ENCODE measurements at regions of chr17 and their contacts with region 1.

Region 1: DNA sequence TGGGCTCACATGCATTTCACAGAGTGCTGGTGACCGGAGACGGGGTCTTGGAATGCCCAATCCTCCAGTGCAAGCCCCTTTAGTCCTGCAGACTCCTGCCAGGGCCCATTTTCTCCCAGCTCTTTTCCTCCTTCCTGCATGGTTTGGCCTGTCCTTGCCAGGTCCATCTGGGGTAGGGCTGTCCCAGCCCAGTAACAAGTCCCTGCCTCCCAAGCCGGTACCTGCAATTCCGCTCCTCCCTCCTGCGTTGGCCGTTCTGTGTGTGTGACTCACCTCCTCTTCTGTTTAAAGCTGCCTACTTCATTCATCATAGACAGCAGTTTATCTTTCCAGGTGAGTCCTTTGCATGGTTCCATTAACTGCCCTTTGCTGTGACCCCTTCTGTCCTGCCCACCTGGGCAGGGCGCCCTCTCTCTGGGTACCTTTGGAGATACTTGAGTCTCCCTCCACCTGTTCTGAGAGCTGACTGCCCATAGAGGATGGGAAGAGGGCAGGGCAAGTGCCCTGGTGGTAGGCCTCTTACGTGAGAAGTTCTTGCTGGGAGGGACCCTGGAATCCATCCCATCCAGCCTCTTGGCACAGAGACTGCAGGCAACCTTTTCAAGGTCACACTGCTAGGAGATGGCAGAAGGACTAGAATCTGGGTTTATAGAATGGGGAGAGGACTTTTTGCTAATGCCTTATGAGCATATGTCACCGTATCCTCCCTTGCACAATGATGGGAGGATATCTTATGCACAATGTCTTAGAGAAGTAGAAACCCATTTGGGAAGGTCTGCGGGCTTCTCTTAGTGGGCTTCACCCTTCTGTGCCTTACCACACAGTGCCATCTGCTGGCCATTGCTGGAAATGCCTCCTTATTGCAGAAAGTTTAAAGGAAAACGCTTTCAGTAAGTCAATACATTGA is 29.7 kb upstream of the LGALS9 start:
- DNase-seq: peak in 9 of 10 donors; percentile 60 to 96 (median 89)

Region 2: DNA sequence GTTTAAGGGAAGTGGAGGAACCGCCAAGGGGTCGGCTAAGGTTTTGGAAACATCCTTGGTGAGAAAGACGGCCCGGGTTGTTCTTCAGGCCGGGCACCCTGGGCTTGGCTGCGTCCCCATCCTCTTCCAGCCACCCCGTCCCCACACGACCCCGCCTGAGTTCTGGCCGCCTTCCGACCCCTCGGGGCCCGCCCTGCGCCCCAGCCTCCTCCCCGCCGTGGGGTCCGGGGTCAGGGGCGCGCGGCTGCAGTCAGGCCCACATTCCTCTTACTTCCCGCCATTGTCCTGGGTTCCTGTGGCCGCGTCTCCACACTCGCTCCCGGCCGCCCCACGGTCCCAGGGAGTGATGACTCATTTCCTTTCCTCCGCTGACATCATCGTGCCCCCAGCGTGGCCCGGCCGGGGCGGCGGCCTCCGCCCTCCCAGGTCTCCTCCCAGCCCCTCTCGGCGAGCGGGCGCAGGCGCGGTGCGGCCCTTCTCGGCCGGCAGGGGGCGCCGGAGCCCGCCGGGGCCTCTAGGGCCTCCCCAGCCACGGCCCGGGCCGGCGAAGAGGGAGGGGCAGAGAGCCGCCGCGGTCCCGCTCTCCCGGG is 247.8 kb before region 1 on chr17:
- intact Hi-C with region 1: loop called (anchors 1 kb)
- DNase-seq: peak; percentile 50 to 96 (median 75)

Region 3: GRCh38 chr17:27494192-27495091 is 106.9 kb before region 1 on chr17:
- intact Hi-C with region 1: loop called (anchors 2 kb)
- DNase-seq: peak in 8 of 10 donors; percentile 20 to 89 (median 52)

Region 4: GRCh38 chr17:27630607-27631410 is 29.5 kb after region 1 on chr17 and contains the start of gene LGALS9:
- intact Hi-C with region 1: no loop called
- DNase-seq: no peak

Region 5: DNA sequence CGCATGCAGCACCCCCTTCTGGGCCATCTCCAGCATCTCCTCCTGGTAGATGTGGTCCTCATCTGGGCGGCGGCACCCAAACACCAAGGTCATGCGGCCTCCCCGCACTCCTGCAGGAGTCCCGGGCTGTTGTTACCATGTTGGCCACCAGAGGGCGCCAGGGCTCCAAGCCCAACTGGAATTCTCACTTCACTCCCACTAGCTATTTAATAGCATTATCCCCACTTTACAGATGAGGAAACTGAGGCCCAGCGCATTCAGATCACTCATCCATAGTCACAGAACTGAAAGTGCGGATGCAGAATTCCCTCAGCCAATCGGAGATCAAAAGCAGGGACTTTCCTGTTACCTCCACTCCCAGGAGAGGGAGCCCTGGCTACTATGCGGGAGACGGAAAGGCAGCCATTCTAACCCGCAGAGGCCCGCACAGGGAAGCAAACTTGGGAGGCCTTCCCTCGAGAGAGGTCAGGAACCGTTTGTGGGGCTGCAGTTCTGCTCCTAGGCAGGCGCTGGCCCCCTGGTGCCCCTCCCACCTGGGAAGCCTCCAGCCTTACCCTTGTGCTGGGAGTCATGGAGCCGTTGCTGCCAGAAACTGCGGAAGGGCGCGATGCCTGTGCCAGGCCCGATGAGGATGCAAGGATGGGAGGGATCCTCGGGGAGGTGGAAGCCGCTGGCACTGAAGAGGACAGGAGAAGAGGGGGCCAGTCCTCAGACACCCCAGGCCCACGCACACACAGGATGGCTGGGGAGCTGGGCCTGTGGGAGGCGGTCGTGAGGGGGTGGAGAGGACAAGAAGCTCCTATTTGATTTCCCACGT is 159.0 kb after region 1 on chr17:
- intact Hi-C with region 1: loop called (anchors 10 kb)
- DNase-seq: peak; percentile 47 to 93 (median 74)

Measured in posterior cingulate gyrus (tissue), 11 donors.